ENCODE measurements at regions of chr4 and their contacts with region 1.

Region 1: DNA sequence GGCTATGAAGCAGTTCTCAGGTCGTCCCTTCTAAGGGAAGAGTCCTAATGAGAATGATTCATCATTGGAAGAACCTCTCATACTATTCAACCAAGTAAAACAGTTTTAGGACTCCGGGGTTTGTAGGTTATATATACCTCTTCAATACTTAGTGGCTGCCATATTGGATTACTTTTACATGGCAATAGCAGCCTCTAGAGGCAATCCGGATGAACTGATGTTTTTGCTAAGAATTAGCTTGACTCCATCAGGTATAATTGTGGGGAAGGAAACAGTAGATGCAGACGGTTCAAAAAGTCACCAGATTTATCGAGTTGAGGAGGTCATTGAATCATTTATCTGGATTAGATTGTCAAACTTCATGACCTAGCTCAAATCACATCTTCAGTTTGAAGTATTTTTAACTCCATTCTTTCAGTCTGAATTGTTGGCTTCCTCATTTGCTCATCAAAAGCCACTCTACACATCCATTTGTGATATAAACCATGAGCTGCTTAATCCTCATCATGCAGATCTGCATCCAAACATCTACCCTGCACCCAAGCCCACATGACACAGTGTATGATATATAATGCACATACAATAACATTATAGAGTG is 28.4 kb downstream of the GUCY1B1 start:
- DNase-seq: peak; percentile 75
- H3K4me3 ChIP-seq: no peak overlapping the region
- H3K27ac ChIP-seq: no peak overlapping the region
- H3K4me1 ChIP-seq: no peaks in the 10 kb centered on the region
- H3K27me3 ChIP-seq: no peaks in the 10 kb centered on the region
- CTCF ChIP-seq: peak; percentile 64 to 67
- POLR2A ChIP-seq: no peak

Region 2: DNA sequence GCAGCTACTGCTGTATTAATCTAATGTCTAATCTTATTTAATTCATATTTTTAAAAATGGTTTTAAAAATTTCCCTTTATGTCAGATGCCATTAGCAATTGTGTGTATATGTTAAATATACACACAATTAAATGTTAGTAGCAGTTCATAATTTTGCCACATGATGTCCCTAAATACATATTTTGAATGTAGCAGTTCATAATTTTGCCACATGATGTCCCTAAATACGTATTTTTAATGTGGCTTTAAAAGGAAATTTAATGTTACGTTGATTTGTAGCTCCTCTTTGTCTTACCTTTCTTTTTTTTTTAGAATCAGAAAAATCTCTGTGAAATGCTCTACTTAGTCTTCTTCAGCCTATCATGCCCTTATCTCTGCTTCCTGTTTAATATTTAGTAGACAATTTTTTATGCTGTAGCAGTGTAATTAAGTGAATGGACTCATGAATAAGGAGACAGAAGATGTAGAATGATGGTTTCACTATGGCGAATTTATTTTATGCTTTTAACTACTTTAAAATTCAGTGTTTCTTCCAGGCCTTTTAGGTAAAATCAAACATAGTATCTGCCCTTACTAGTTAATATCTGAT is 980.1 kb before region 1 on chr4:
- CTCF ChIA-PET with region 1: interaction called, 21 read pairs
- POLR2A ChIA-PET with region 1: no interaction called
- dilution Hi-C with region 1: no loop called
- intact Hi-C with region 1: loop called (anchors 1 kb)
- DNase-seq: peak; percentile 61
- H3K4me3 ChIP-seq: peak overlapping the region in 1 of 3 experiments; percentile 17
- H3K27ac ChIP-seq: no peak overlapping the region
- H3K4me1 ChIP-seq: peaks cover 2% of the 10 kb centered on the region
- H3K27me3 ChIP-seq: peaks cover 0 to 6% of the 10 kb centered on the region in 2 experiments
- CTCF ChIP-seq: peak; percentile 32 to 53
- POLR2A ChIP-seq: no peak

Region 3: DNA sequence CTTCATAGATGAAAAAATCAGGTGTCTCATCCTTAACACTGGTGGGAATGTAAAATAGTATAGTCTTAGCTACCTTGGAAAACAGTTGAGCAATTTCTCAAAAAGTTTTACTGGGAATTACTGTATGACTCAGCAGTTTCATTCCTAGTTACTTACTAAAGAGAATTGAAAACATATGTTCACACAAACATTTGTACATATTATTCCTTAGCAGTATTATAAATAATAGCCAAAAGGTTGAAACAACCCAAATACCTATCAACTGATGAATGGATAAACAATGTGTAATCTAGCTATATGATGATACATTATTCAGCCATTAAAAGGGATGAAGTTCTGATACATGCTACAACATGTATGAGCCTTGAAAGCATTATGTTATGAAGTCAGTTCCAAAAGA is 964.4 kb before region 1 on chr4:
- CTCF ChIA-PET with region 1: no interaction called
- POLR2A ChIA-PET with region 1: no interaction called
- dilution Hi-C with region 1: no loop called
- intact Hi-C with region 1: no loop called
- DNase-seq: no peak
- H3K4me3 ChIP-seq: no peak overlapping the region
- H3K27ac ChIP-seq: no peak overlapping the region
- H3K4me1 ChIP-seq: no peaks in the 10 kb centered on the region
- H3K27me3 ChIP-seq: peaks cover 0 to 2% of the 10 kb centered on the region in 2 experiments
- CTCF ChIP-seq: no peak
- POLR2A ChIP-seq: no peak

Region 4: DNA sequence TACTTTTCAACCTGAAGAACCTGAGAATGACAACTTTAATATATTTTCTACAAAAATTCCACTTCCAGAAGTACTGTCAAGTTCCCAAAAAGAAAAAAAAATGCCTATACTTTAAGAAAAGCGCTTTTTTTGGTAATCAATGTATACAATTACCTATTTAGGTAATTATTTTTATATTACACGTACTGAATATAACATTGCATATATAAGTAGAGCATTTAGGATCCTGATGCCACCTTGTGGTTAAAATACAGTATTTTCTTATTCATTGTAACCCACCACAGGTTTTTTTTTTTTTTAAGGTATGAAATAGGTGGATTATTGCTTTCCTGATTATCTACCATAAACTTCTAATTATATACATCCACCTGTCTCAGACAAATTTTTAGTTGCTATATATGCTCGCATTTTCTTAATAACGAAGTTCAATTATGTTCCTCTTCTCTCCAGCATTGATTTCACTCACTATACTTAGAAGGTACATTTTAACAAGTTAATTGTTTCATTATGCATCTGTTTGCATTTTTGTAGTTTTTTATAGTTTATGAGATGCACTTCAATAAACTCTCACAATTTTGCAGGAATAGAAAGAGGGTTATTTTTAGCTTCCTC is 415.7 kb before region 1 on chr4:
- CTCF ChIA-PET with region 1: interaction called, 11 read pairs
- POLR2A ChIA-PET with region 1: no interaction called
- dilution Hi-C with region 1: no loop called
- intact Hi-C with region 1: no loop called
- DNase-seq: peak; percentile 38
- H3K4me3 ChIP-seq: no peak overlapping the region
- H3K27ac ChIP-seq: no peak overlapping the region
- H3K4me1 ChIP-seq: peaks cover 4% of the 10 kb centered on the region
- H3K27me3 ChIP-seq: peaks cover 0 to 6% of the 10 kb centered on the region in 2 experiments
- CTCF ChIP-seq: peak in 1 of 2 donors; percentile 17
- POLR2A ChIP-seq: no peak

Region 5: DNA sequence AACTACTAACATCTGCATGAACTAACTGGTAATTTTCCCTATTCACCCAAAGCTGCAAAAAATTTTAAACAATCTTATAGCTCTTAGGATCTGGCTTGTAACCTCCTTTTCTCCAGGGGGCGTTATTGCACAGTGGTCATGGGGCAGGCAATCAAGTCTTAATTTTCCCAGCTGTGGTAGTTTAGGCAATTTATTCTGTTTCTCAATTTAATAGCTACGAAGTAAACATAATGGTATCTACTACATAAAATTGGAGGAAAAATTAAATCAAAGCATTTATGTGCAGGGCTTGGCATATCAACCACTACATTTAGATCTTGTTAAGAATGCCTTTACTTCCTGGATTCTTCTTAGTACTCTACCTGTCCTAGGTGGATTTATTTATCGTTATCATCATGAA is 257.9 kb before region 1 on chr4:
- CTCF ChIA-PET with region 1: interaction called, 100 read pairs
- POLR2A ChIA-PET with region 1: no interaction called
- dilution Hi-C with region 1: no loop called
- intact Hi-C with region 1: loop called (anchors 1 kb)
- DNase-seq: peak; percentile 74
- H3K4me3 ChIP-seq: no peak overlapping the region
- H3K27ac ChIP-seq: no peak overlapping the region
- H3K4me1 ChIP-seq: peaks cover 13% of the 10 kb centered on the region
- H3K27me3 ChIP-seq: no peaks in the 10 kb centered on the region
- CTCF ChIP-seq: peak; percentile 29 to 43
- POLR2A ChIP-seq: no peak

Region 6: GRCh38 chr4:155802190-155802959 is 15.2 kb after region 1 on chr4:
- CTCF ChIA-PET with region 1: interaction called, 22 read pairs
- POLR2A ChIA-PET with region 1: no interaction called
- dilution Hi-C with region 1: no loop called
- intact Hi-C with region 1: no loop called
- DNase-seq: no peak
- H3K4me3 ChIP-seq: no peak overlapping the region
- H3K27ac ChIP-seq: no peak overlapping the region
- H3K4me1 ChIP-seq: peaks cover 10% of the 10 kb centered on the region
- H3K27me3 ChIP-seq: no peaks in the 10 kb centered on the region
- CTCF ChIP-seq: no peak
- POLR2A ChIP-seq: no peak

Measured in endothelial cell of umbilical vein (primary cell).